A549 (cell line): ENCODE measurements at regions of chr11 and their contacts with region 1.

Region 1: GRCh38 chr11:67606492-67607201 is at the start of gene NDUFV1:
- DNase-seq: peak; percentile 69 to 92
- ATAC-seq: peak; percentile 95 to 99
- H3K4me3 ChIP-seq: peak within 1 kb of the TSS; percentile 82
- H3K27ac ChIP-seq: peak within 1 kb of the TSS; percentile 76 to 91
- H3K4me1 ChIP-seq: peaks cover 19% of the 10 kb centered on the region
- CTCF ChIP-seq: peak; percentile 36; the same call in 2 of the 3 replicates
- EP300 ChIP-seq: no peak
- POLR2A ChIP-seq: peak; percentile 73
- RAD21 ChIP-seq: peak in 1 of 2 experiments; percentile 39; a peak in 2 of 5 replicates
- polyA plus RNA-seq, gene NDUFV1: 78.8 and 95.1 TPM in 2 replicates

Region 2: GRCh38 chr11:67136156-67136555 is 470.5 kb before region 1 on chr11:
- CTCF ChIA-PET with region 1: no interaction called
- POLR2A ChIA-PET with region 1: no interaction called
- DNase-seq: no peak
- ATAC-seq: no peak
- H3K4me3 ChIP-seq: no peak overlapping the region
- H3K27ac ChIP-seq: no peak overlapping the region
- H3K4me1 ChIP-seq: no peaks in the 10 kb centered on the region
- CTCF ChIP-seq: no peak
- EP300 ChIP-seq: no peak
- POLR2A ChIP-seq: no peak
- RAD21 ChIP-seq: no peak

Region 3: DNA sequence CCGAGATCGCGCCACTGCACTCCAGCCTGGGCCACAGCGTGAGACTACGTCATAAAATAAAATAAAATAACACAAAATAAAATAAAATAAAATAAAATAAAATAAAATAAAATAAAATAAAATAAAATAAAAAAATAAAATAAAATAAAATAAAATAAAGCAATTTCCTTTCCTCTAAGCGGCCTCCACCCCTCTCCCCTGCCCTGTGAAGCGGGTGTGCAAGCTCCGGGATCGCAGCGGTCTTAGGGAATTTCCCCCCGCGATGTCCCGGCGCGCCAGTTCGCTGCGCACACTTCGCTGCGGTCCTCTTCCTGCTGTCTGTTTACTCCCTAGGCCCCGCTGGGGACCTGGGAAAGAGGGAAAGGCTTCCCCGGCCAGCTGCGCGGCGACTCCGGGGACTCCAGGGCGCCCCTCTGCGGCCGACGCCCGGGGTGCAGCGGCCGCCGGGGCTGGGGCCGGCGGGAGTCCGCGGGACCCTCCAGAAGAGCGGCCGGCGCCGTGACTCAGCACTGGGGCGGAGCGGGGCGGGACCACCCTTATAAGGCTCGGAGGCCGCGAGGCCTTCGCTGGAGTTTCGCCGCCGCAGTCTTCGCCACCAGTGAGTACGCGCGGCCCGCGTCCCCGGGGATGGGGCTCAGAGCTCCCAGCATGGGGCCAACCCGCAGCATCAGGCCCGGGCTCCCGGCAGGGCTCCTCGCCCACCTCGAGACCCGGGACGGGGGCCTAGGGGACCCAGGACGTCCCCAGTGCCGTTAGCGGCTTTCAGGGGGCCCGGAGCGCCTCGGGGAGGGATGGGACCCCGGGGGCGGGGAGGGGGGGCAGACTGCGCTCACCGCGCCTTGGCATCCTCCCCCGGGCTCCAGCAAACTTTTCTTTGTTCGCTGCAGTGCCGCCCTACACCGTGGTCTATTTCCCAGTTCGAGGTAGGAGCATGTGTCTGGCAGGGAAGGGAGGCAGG is 23.1 kb before region 1 on chr11 and contains the start of gene GSTP1:
- CTCF ChIA-PET with region 1: interaction called, 14 read pairs
- POLR2A ChIA-PET with region 1: no interaction called
- DNase-seq: peak; percentile 81 to 90
- ATAC-seq: peak; percentile 88 to 93
- H3K4me3 ChIP-seq: peak within 1 kb of the TSS; percentile 92
- H3K27ac ChIP-seq: peak within 1 kb of the TSS; percentile 97 to 99
- H3K4me1 ChIP-seq: peaks cover 55% of the 10 kb centered on the region
- CTCF ChIP-seq: peak; percentile 75
- EP300 ChIP-seq: no peak
- POLR2A ChIP-seq: peak; percentile 99
- RAD21 ChIP-seq: peak; percentile 32 to 62; a peak in 4 of 5 replicates
- polyA plus RNA-seq, gene GSTP1: 1,034 and 1,447 TPM in 2 replicates